Activated T-helper 1 cell treated with anti-CD3 and anti-CD28 coated beads, Interleukin-12 subunit alpha, Interleukin-12 subunit beta, Interleukin-2, Interleukin-4 antibody, amounts not matched to agents 30 ng/mL and 10 ng/mL and 1 ng/mL, durations not matched to agents 14 hours and 24 hours and 36 hours (primary cell): ENCODE measurements at regions of chr16 and their contacts with region 1.

Region 1: GRCh38 chr16:57462209-57462977 is at the start of gene POLR2C:
- DNase-seq: peak; percentile 89
- H3K4me3 Mint-ChIP-seq: peak within 1 kb of the TSS; percentile 100
- H3K27ac Mint-ChIP-seq: peak within 1 kb of the TSS; percentile 99
- H3K4me1 Mint-ChIP-seq: peaks cover 43% of the 10 kb centered on the region
- H3K27me3 Mint-ChIP-seq: no peaks in the 10 kb centered on the region
- total RNA-seq, gene POLR2C: 89.2 and 90.9 TPM in 2 replicates

Region 2: GRCh38 chr16:57422026-57422944 is 40.1 kb before region 1 on chr16:
- intact Hi-C with region 1: loop called (anchors 1 kb)
- DNase-seq: no peak
- H3K4me3 Mint-ChIP-seq: no peak overlapping the region
- H3K27ac Mint-ChIP-seq: no peak overlapping the region
- H3K4me1 Mint-ChIP-seq: peaks cover 14% of the 10 kb centered on the region
- H3K27me3 Mint-ChIP-seq: no peaks in the 10 kb centered on the region

Region 3: GRCh38 chr16:57475711-57476339 is 13.4 kb after region 1 on chr16:
- intact Hi-C with region 1: loop called (anchors 1 kb)
- DNase-seq: peak; percentile 81
- H3K4me3 Mint-ChIP-seq: peak overlapping the region; percentile 45
- H3K27ac Mint-ChIP-seq: peak overlapping the region; percentile 52
- H3K4me1 Mint-ChIP-seq: peaks cover 18% of the 10 kb centered on the region
- H3K27me3 Mint-ChIP-seq: no peaks in the 10 kb centered on the region

Region 4: GRCh38 chr16:57519796-57520360 is 57.5 kb after region 1 on chr16:
- intact Hi-C with region 1: loop called (anchors 1 kb)
- DNase-seq: peak; percentile 69
- H3K4me3 Mint-ChIP-seq: no peak overlapping the region
- H3K27ac Mint-ChIP-seq: peak overlapping the region; percentile 65
- H3K4me1 Mint-ChIP-seq: peaks cover 21% of the 10 kb centered on the region
- H3K27me3 Mint-ChIP-seq: no peaks in the 10 kb centered on the region

Region 5: GRCh38 chr16:57535680-57536305 is 73.4 kb after region 1 on chr16:
- intact Hi-C with region 1: loop called (anchors 5 kb)
- DNase-seq: peak; percentile 92
- H3K4me3 Mint-ChIP-seq: peak overlapping the region; percentile 78
- H3K27ac Mint-ChIP-seq: peak overlapping the region; percentile 93
- H3K4me1 Mint-ChIP-seq: peaks cover 62% of the 10 kb centered on the region
- H3K27me3 Mint-ChIP-seq: no peaks in the 10 kb centered on the region

Region 6: GRCh38 chr16:57591086-57591869 is 128.9 kb after region 1 on chr16:
- intact Hi-C with region 1: loop called (anchors 5 kb)
- DNase-seq: peak; percentile 56
- H3K4me3 Mint-ChIP-seq: peak overlapping the region; percentile 63
- H3K27ac Mint-ChIP-seq: peak overlapping the region; percentile 85
- H3K4me1 Mint-ChIP-seq: peaks cover 55% of the 10 kb centered on the region
- H3K27me3 Mint-ChIP-seq: peaks cover 2% of the 10 kb centered on the region

Region 7: GRCh38 chr16:57899771-57900661 is 437.6 kb after region 1 on chr16:
- intact Hi-C with region 1: no loop called
- DNase-seq: peak; percentile 61
- H3K4me3 Mint-ChIP-seq: no peak overlapping the region
- H3K27ac Mint-ChIP-seq: no peak overlapping the region
- H3K4me1 Mint-ChIP-seq: peaks cover 2% of the 10 kb centered on the region
- H3K27me3 Mint-ChIP-seq: peaks cover 9% of the 10 kb centered on the region